ENCODE measurements at regions of chr2 and their contacts with region 1.

Region 1: DNA sequence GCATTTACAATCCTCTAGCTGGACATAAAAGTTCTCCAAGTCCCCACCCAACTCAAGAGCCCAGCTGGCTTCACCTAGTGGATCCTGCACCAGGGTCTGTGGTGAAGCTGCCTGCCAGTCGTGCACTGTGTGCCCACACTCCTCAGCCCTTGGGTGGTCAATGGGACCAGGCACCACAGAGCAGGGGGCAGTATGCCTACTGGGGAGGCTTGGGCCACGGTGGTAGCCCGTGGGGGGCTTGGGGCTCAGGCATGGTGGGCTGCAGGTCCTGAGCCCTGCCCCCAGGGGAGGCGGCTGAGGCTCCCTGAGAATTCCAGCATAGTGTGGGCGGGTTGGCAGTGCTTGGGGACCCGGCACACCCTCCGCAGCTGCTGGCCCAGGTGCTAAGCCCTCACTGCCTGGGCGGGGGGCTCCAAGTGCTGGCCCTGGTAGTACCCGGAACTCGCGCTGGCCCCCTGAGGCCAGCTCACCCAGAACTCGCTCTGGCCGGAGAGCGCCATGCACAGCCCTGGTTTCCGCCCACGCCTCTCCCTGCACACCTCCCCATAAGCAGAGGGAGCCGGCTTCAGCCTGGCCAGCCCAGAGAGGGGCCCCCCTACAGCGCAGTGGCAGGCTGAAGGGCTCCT is 1473.4 kb downstream of the SUCLG1 start:
- DNase-seq: no peak
- H3K4me3 ChIP-seq: no peak overlapping the region
- H3K27ac ChIP-seq: no peak overlapping the region
- H3K27me3 ChIP-seq: no peaks in the 10 kb centered on the region
- CTCF ChIP-seq: no peak

Region 2: GRCh38 chr2:81163582-81163981 is 1822.1 kb before region 1 on chr2:
- CTCF ChIA-PET with region 1: no interaction called
- POLR2A ChIA-PET with region 1: no interaction called
- DNase-seq: no peak
- H3K4me3 ChIP-seq: no peak overlapping the region
- H3K27ac ChIP-seq: no peak overlapping the region
- H3K27me3 ChIP-seq: no peaks in the 10 kb centered on the region
- CTCF ChIP-seq: no peak

Region 3: DNA sequence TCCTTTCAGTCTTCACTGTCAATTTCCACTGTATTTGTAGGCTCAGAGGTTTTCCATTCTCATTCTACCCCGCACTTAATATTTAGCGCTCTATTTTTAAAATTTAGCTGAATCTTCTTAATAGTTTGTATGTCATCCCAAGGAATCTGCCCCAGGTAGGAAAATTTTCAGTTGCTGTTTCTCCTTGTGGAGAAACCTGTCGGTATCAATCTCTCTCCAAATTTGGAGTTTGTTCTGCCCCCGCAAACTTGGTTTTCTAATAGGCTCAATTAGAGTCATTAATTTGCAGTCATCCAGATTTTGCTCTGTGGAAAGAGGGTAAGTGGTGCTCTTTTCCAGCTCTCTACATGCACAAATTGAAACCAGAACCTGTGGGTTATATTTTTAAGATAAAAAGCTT is 1618.2 kb after region 1 on chr2:
- CTCF ChIA-PET with region 1: interaction called, 10 read pairs
- POLR2A ChIA-PET with region 1: no interaction called
- DNase-seq: no peak
- H3K4me3 ChIP-seq: no peak overlapping the region
- H3K27ac ChIP-seq: no peak overlapping the region
- H3K27me3 ChIP-seq: no peaks in the 10 kb centered on the region
- CTCF ChIP-seq: no peak

Measured in AG04450 (cell line).